ENCODE measurements at regions of chr2 and their contacts with region 1.

Region 1: DNA sequence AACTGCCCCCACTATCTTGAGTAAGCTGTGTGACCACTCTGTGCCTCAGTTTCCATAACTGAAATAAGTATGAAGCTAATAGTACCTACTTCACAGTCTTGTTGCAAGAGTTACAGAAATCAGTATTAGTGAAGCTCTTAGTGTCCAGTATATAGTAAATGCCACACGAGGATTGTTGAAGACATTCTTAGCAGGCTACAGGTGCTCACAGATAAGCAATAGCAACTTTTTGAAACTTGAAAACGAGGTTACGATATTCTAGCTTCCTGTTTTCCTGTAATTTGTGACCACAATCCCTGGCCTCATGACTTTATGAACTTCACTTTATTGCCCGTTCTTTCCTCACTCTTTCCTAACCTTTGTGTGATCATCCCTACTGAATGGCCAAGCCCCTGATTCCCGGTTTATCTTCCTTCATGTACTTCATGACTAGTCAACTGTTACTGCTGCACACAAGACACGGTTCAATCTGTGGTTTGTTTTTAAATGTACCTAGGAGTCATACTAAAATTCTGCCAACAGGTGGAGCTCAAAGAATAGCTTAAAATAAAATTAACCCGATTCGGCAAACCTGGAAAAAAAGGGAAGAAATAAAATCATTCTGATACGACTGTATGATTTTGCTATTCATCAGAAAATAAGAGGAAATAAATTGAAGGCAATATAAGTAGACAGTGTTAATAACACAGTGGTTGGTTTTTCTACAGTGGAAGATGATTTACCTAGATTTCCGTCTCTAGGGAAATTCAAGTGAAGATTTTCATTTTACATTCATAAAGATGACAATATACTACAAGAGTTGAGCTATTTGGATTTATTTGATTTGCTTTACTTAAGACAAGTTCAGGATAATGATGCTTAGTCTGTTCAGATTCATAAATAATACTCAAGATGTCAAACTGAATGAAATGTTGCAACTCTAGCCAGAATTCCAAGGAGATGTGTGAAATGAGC is 38.1 kb upstream of the STAT1 start:
- DNase-seq: peak; percentile 75
- H3K4me3 ChIP-seq: no peak overlapping the region
- H3K27ac ChIP-seq: no peak overlapping the region
- H3K4me1 ChIP-seq: peaks cover 5% of the 10 kb centered on the region
- H3K27me3 ChIP-seq: peaks cover 4 to 8% of the 10 kb centered on the region in 2 experiments
- CTCF ChIP-seq: peak; percentile 27 to 38
- POLR2A ChIP-seq: no peak

Region 2: GRCh38 chr2:190880378-190881073 is 171.6 kb before region 1 on chr2 and contains the start of gene GLS:
- CTCF ChIA-PET with region 1: no interaction called
- POLR2A ChIA-PET with region 1: no interaction called
- dilution Hi-C with region 1: no loop called
- intact Hi-C with region 1: no loop called
- DNase-seq: peak; percentile 98
- H3K4me3 ChIP-seq: peak within 1 kb of the TSS; percentile 80 to 99 (median 98)
- H3K27ac ChIP-seq: peak within 1 kb of the TSS; percentile 83
- H3K4me1 ChIP-seq: peaks cover 32% of the 10 kb centered on the region
- H3K27me3 ChIP-seq: no peaks in the 10 kb centered on the region
- CTCF ChIP-seq: no peak
- POLR2A ChIP-seq: peak; percentile 99
- total RNA-seq, gene GLS: 181 and 183 TPM in 2 replicates

Region 3: DNA sequence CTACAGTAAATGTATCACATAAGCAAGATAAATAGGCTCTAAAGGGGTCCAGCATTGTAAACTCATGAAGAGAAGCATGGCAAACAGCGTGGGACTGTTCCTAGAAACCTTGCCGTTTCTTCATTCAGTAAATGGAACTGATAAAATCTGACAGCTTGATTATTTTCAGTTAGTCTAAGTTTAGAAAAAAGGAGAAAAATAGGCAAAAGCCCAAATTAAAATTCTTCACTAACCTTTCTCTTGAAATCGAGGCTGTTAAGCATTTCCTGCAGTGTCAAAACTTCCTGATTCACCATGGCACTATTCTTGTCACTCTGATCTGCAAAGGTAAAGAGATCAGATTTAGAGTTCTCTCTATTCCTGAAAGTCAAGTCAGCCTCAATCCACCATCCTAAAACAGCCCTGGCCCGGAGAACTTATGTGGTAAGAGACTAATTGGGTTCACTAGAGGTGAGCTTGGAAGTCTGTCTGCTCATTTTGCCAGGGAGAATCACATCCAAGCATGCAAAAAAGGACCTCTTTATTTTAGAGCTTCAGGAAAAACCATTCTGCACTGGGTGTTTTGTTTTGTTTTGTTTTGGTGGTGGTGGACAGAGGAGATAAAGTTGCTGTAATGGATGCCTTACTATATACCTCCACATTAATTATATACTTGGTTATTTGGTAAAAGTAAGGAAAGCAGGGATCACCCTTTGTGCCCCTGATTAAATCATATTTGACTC is 14.3 kb after region 1 on chr2:
- CTCF ChIA-PET with region 1: interaction called, 49 read pairs
- POLR2A ChIA-PET with region 1: no interaction called
- dilution Hi-C with region 1: no loop called
- intact Hi-C with region 1: no loop called
- DNase-seq: no peak
- H3K4me3 ChIP-seq: no peak overlapping the region
- H3K27ac ChIP-seq: no peak overlapping the region
- H3K4me1 ChIP-seq: no peaks in the 10 kb centered on the region
- H3K27me3 ChIP-seq: peaks cover 0 to 2% of the 10 kb centered on the region in 2 experiments
- CTCF ChIP-seq: no peak
- POLR2A ChIP-seq: no peak

Region 4: DNA sequence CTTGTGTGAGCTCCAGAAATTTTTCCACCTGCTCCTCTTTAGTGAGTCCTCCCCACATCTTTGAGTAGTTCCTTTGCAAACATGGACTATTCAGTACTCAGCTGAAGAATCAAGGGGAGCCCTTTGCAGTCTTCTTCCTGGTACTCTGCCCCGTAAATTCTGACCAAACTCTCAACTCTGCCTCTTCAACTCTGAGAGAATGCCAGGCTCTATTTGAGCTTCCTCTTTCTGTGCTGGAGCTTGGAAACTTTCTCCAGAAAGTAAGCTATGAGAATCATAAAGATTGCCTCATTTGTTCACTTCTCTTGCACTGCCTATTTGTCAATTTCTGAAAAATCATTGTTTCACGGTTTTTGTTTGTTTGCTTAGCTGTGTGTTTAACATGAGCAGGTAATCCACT is 106.1 kb after region 1 on chr2:
- CTCF ChIA-PET with region 1: interaction called, 358 read pairs
- POLR2A ChIA-PET with region 1: no interaction called
- dilution Hi-C with region 1: no loop called
- intact Hi-C with region 1: loop called (anchors 1 kb)
- DNase-seq: no peak
- H3K4me3 ChIP-seq: no peak overlapping the region
- H3K27ac ChIP-seq: no peak overlapping the region
- H3K4me1 ChIP-seq: no peaks in the 10 kb centered on the region
- H3K27me3 ChIP-seq: peaks cover 5 to 7% of the 10 kb centered on the region in 2 experiments
- CTCF ChIP-seq: no peak
- POLR2A ChIP-seq: no peak

Region 5: DNA sequence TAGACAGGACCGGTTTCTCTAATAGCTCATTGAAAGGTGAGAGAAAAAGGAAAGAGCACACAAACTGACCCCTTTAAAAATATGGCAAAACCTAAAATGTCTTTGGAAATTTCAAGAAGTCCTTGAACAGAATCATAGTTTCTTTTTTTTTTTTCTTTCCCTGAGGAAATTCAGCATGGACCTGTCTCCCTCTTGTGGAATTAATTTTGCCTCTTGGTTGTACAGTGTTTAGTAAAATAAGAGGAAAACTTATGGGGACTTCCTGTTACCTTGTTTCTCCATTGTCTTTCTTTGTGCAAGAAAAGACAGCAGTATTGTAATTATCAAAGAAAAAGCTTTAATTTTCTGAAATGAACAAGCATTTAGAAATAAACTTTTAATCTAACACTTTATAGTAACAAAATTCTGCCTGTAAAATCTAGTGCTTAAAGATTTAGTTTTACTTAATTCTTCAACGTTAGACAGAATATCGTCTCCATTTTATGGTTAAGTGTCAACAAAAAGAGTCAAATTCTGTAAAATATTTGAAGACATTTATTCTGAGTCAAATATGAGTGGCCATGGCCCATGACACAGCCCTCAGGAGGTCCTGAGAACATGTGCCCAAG is 449.6 kb after region 1 on chr2:
- CTCF ChIA-PET with region 1: interaction called, 17 read pairs
- POLR2A ChIA-PET with region 1: interaction called, 5 read pairs
- dilution Hi-C with region 1: no loop called
- intact Hi-C with region 1: no loop called
- DNase-seq: peak; percentile 59
- H3K4me3 ChIP-seq: no peak overlapping the region
- H3K27ac ChIP-seq: no peak overlapping the region
- H3K4me1 ChIP-seq: no peaks in the 10 kb centered on the region
- H3K27me3 ChIP-seq: no peaks in the 10 kb centered on the region
- CTCF ChIP-seq: peak; percentile 16 to 21
- POLR2A ChIP-seq: no peak

Region 6: DNA sequence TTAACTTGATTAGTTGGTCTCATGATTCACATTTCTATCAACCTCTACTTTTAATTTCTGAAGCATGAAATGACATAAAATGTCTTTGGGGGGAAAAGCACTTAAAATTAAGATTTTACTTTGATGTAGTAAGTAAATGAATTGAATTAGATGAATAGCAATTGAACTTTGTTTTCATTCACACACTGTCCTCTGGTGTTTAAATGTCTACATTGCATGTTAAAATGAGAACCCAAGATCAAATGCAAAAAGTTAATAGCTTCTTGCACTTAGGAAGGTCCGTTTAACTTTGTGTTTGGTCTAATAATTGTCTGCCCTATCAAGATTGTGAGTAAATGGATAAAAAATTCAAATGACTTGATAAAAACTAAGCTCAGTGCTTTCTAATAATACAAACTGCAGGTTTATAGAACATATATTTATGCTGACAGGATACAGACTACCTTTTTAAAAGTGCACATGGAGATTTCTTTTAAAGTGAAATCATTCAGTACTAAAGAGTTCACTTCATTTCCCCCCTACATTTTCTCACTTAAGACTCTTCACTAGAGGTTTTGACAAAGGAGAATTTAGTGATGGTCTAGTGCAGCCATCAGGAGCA is 469.6 kb after region 1 on chr2:
- CTCF ChIA-PET with region 1: interaction called, 87 read pairs
- POLR2A ChIA-PET with region 1: no interaction called
- dilution Hi-C with region 1: no loop called
- intact Hi-C with region 1: loop called (anchors 2 kb)
- DNase-seq: peak; percentile 56
- H3K4me3 ChIP-seq: no peak overlapping the region
- H3K27ac ChIP-seq: no peak overlapping the region
- H3K4me1 ChIP-seq: no peaks in the 10 kb centered on the region
- H3K27me3 ChIP-seq: peaks cover 5 to 12% of the 10 kb centered on the region in 2 experiments
- CTCF ChIP-seq: peak; percentile 36 to 49
- POLR2A ChIP-seq: no peak